ENCODE measurements at regions of chr2 and their contacts with region 1.

Region 1: DNA sequence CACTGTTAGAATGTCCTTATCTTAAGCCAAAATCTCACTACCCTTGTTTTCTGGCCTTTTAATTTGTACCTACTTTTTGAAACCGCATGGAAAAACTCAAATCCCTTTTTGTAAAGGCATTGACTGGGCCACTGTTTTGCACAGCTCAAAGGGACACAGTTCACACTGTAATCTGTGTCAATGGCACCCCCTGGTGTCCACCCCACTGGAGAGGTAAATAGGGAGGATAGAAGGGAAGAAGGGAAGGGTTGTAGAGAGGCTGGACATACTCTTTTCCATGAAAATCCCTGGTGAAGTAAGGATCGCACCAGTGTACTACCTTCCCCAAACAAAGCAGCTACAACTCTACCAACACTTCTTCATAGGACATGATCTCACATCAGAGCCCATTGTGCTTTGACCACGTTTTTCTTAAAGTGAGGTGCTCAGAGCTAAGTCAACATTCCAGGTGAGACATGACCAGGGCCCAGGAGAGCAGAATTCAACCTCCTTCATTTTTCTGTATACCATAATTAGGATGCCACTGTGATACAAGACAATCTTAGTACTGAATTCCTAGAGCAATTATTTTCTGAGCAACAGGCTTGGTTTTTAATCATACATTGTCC is 92.4 kb upstream of the RMDN2 start:
- DNase-seq: peak; percentile 92 to 93
- H3K4me3 ChIP-seq: no peak overlapping the region
- H3K27ac ChIP-seq: no peak overlapping the region
- H3K4me1 ChIP-seq: peaks cover 0 to 23% (median 6%) of the 10 kb centered on the region in 4 donors
- H3K27me3 ChIP-seq: no peaks in the 10 kb centered on the region
- CTCF ChIP-seq: peak in 5 of 7 experiments; percentile 62 to 95 (median 80)
- EP300 ChIP-seq: no peak
- POLR2A ChIP-seq: no peak

Region 2: DNA sequence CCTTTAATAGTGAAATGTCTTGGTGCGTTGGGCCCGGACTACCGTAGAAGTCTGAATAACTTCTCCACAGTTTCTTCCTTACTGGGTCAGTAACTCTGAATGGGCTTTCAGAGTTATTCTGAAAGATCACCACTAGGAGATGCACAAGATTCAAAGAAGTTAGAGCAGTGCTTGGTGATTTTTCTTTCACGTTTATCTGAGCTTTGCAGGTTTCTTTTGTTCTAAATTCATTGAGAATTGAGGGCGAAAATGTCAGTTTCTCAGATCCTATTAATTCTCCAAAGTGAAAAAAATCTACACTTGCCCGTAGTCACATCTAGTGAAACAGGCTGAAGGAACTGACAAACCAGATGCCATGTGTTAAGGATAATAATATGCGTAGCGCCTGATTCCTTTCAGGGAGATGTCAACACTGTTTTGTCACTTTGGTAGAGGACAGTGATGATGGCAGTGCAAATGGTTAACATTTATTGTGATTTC is 418.2 kb before region 1 on chr2:
- intact Hi-C with region 1: loop called (anchors 5 kb)
- DNase-seq: peak in 1 of 2 donors; percentile 81
- H3K4me3 ChIP-seq: no peak overlapping the region
- H3K27ac ChIP-seq: no peak overlapping the region
- H3K4me1 ChIP-seq: peaks cover 0 to 10% (median 2%) of the 10 kb centered on the region in 4 donors
- H3K27me3 ChIP-seq: no peaks in the 10 kb centered on the region
- CTCF ChIP-seq: peak in 5 of 7 experiments; percentile 51 to 96 (median 74)
- EP300 ChIP-seq: no peak
- POLR2A ChIP-seq: no peak

Region 3: GRCh38 chr2:37506407-37507050 is 326.2 kb before region 1 on chr2:
- intact Hi-C with region 1: no loop called
- DNase-seq: peak in 1 of 2 donors; percentile 64
- H3K4me3 ChIP-seq: no peak overlapping the region
- H3K27ac ChIP-seq: peak overlapping the region in 3 of 5 donors; percentile 21 to 76 (median 45)
- H3K4me1 ChIP-seq: peaks cover 0 to 21% (median 9%) of the 10 kb centered on the region in 4 donors
- H3K27me3 ChIP-seq: no peaks in the 10 kb centered on the region
- CTCF ChIP-seq: no peak
- EP300 ChIP-seq: no peak
- POLR2A ChIP-seq: no peak

Region 4: GRCh38 chr2:37648331-37649011 is 184.2 kb before region 1 on chr2:
- intact Hi-C with region 1: no loop called
- DNase-seq: peak; percentile 43 to 44
- H3K4me3 ChIP-seq: no peak overlapping the region
- H3K27ac ChIP-seq: peak overlapping the region; percentile 25 to 78 (median 55)
- H3K4me1 ChIP-seq: peaks cover 27 to 94% (median 52%) of the 10 kb centered on the region in 4 donors
- H3K27me3 ChIP-seq: no peaks in the 10 kb centered on the region
- CTCF ChIP-seq: peak in 1 of 7 experiments; percentile 17
- EP300 ChIP-seq: no peak
- POLR2A ChIP-seq: no peak

Measured in stomach (tissue), 19 donors.